K562 (cell line): ENCODE measurements at regions of chr22 and their contacts with region 1.

Region 1: DNA sequence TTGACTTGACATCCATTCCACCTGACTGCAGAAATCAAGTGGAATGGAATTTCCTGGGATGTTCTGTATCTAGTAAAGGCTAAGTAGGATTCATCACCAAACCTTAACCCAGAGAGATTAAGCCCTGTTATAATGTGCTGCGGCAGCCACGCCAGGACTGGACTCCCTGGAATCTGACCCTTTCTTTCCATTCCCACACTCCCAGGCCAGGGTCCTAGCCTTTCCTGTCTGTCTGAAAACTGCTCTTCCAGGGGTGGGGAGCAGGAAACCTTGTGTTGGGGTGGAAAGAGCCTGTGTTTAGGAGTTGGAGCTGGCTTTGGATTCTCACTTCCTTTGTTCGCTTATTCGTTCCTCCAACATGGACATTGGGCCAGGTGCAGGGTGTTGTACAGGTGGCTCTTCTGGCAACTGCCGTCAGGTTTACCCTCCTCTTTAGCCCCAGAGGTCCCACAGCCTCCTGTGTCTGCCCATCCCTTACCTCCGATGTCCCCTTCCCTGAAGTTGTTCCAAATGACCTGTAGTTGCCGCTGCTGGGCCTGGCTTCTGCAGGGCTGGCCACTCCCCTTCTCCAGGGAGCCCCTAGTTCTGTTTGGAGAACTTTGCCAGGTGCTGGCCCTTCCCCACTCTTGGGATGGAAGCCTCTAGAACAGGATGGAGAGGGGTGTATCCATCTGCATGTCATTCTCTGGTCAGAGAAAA is 20.5 kb upstream of the PARVB start:
- DNase-seq: peak; percentile 23 to 51 (median 36)
- ATAC-seq: peak; percentile 91
- H3K4me3 ChIP-seq: no peak overlapping the region
- H3K27ac ChIP-seq: no peak overlapping the region
- H3K4me1 ChIP-seq: peaks cover 7% of the 10 kb centered on the region in 2 experiments; a peak in 4 of 5 replicates
- H3K27me3 ChIP-seq: no peaks in the 10 kb centered on the region
- CTCF ChIP-seq: peak; percentile 50 to 66 (median 62)
- EP300 ChIP-seq: no peak
- POLR2A ChIP-seq: no peak
- RAD21 ChIP-seq: peak; percentile 31 to 52

Region 2: GRCh38 chr22:43488031-43488866 is 515.3 kb before region 1 on chr22:
- CTCF ChIA-PET with region 1: no interaction called
- POLR2A ChIA-PET with region 1: no interaction called
- in situ Hi-C with region 1: no loop called
- intact Hi-C with region 1: no loop called
- DNase-seq: no peak
- ATAC-seq: no peak
- H3K4me3 ChIP-seq: no peak overlapping the region
- H3K27ac ChIP-seq: no peak overlapping the region
- H3K4me1 ChIP-seq: no peaks in the 10 kb centered on the region
- H3K27me3 ChIP-seq: peaks cover 0 to 7% of the 10 kb centered on the region in 2 experiments; a peak in 2 of 5 replicates
- CTCF ChIP-seq: no peak
- EP300 ChIP-seq: no peak
- POLR2A ChIP-seq: no peak
- RAD21 ChIP-seq: no peak

Region 3: DNA sequence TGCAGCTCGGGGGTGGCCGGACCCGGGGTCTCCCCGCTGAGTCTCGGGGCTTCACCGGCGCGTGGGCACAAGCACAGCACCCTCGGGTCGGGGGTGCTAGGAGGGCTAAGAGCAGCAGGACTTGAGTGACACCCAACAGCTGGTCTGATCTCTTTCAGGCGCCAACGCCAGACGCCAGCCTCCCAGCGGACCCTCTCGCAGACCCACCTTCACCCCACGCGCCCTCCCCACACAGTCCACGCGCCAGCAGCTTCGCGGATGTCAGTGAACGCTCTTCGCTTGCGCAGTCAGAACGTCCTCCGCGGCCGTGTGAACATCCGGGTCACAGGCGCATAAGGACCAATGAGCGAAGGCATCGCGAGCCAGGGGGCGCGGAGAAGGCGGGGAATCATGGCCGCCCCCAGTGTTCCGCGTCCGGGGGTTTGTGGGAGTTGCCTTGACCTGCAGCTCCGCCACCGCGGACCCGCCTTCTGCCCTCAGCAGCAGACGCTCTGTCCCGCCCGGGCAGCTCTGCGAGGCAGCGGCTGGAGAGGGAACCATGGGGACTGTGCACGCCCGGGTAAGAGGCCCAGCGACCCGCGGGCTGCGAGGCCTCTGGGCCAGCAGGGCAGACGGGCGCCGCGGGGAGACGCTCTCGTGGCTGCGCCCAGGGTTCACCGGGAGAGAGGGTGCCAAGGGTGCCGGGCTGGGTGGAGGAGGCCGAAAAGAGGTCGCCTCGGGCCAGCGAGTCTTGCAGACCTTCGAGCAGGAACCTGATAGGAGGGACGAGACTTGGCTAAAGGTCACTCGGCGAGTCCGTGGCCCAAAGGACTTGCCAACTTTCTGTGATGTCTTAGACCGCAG is 48.3 kb before region 1 on chr22 and contains the start of gene SAMM50:
- CTCF ChIA-PET with region 1: no interaction called
- POLR2A ChIA-PET with region 1: no interaction called
- in situ Hi-C with region 1: no loop called
- intact Hi-C with region 1: no loop called
- DNase-seq: peak; percentile 87 to 92 (median 89)
- ATAC-seq: peak; percentile 98
- H3K4me3 ChIP-seq: peak within 1 kb of the TSS; percentile 94
- H3K27ac ChIP-seq: peak within 1 kb of the TSS; percentile 75
- H3K4me1 ChIP-seq: peaks cover 11 to 14% of the 10 kb centered on the region in 2 experiments; a peak in 3 of 5 replicates
- H3K27me3 ChIP-seq: no peaks in the 10 kb centered on the region
- CTCF ChIP-seq: no peak
- EP300 ChIP-seq: no peak
- POLR2A ChIP-seq: peak; percentile 89
- RAD21 ChIP-seq: no peak
- polyA plus RNA-seq, gene SAMM50: 14.6 to 27.2 TPM

Region 4: GRCh38 chr22:44080936-44081861 is 77.6 kb after region 1 on chr22:
- CTCF ChIA-PET with region 1: interaction called, 5 read pairs
- POLR2A ChIA-PET with region 1: no interaction called
- in situ Hi-C with region 1: loop called (anchors 5 kb)
- intact Hi-C with region 1: loop called (anchors 2 kb)
- DNase-seq: peak; percentile 66 to 72 (median 67)
- ATAC-seq: peak; percentile 82
- H3K4me3 ChIP-seq: no peak overlapping the region
- H3K27ac ChIP-seq: no peak overlapping the region
- H3K4me1 ChIP-seq: peaks cover 0 to 7% of the 10 kb centered on the region in 2 experiments; a peak in 1 of 5 replicates
- H3K27me3 ChIP-seq: no peaks in the 10 kb centered on the region
- CTCF ChIP-seq: peak; percentile 58 to 80 (median 61)
- EP300 ChIP-seq: no peak
- POLR2A ChIP-seq: no peak
- RAD21 ChIP-seq: peak in 1 of 2 experiments; percentile 48; a peak in 3 of 4 replicates